ENCODE measurements at regions of chr2 and their contacts with region 1.

Region 1: GRCh38 chr2:27050281-27050995 is 1.0 kb upstream of the AGBL5 start:
- DNase-seq: peak; percentile 95
- H3K4me3 ChIP-seq: peak overlapping the region; percentile 93
- H3K27ac ChIP-seq: peak overlapping the region; percentile 70
- H3K27me3 ChIP-seq: no peaks in the 10 kb centered on the region
- CTCF ChIP-seq: peak; percentile 57

Region 2: DNA sequence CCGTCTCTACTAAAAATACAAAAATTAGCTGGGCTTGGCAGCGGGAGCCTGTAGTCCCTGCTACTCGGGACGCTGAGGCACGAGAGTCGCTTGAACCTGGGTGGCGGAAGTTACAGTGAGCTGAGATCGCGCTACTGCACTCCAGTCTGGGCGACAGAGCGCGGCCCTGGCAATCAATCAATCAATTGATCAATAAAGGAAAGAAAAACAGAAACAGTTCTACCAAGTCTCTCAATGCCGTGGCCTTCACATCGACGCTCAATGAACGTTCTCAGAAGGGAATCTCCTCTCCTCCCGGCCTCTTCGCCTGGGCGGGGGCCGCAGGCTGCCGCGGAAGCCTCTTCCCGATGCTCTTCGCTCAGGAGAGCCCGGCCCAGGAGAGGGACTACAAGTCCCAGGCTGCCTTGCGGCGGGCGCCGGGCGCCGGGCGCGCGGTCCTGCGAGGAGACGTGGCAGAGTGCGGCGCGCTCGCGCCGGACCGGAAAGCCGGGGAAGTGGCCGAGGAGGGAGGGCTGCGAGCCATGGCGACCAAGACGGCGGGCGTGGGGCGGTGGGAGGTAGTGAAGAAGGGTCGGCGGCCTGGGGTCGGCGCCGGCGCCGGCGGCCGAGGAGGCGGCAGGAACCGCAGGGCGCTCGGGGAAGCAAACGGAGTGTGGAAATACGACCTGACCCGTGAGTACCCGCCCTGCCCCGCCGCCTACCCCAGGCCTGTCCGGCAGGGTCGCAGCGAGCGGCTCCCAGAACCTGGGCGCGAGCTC is 17.8 kb before region 1 on chr2 and contains the start of gene TMEM214:
- CTCF ChIA-PET with region 1: no interaction called
- POLR2A ChIA-PET with region 1: interaction called, 26 read pairs
- DNase-seq: peak; percentile 60
- H3K4me3 ChIP-seq: peak within 1 kb of the TSS; percentile 95
- H3K27ac ChIP-seq: peak within 1 kb of the TSS; percentile 68
- H3K27me3 ChIP-seq: no peaks in the 10 kb centered on the region
- CTCF ChIP-seq: no peak
- polyA plus RNA-seq, gene TMEM214: 121 and 145 TPM in 2 replicates

Region 3: DNA sequence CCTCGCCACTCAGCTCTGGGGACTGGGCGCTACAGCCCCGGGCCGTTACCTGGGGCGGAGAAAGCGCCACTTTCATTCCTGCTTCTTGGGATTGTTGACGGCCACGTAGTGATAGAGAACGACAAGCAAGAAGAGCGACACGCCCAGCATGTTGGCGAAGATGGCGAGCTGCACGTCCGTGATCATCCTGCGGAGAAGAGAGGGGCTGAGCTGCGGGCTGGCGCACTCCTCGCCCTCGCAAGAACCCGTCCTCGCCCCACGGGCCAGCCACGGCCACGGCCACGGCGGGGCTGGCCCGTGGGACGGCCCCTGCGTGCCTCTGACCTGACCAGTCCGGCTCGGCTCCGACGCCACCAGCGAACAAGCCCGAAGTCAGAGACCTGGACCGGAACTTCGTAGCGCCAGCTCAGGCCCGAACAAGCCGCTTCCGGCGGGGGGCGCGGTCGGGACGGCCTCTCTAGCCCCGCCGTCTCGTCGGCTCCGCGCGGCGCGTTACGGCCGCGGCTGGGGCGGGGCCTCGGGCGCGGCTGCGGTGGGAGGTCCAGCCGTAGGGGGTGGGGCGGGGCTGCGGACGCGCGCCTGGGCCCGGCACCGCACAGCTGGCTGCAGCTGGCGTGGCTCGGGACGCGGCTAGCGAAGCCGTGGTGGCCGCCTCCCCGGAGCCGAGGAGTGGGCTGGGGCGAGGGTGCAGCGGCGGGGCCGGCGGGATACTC is 21.0 kb after region 1 on chr2 and contains the start of gene OST4:
- CTCF ChIA-PET with region 1: interaction called, 4 read pairs
- POLR2A ChIA-PET with region 1: interaction called, 41 read pairs
- DNase-seq: peak; percentile 84
- H3K4me3 ChIP-seq: peak within 1 kb of the TSS; percentile 96
- H3K27ac ChIP-seq: peak within 1 kb of the TSS; percentile 99
- H3K27me3 ChIP-seq: no peaks in the 10 kb centered on the region
- CTCF ChIP-seq: no peak; the same call in 1 of the 2 replicates
- polyA plus RNA-seq, gene OST4: 679 and 783 TPM in 2 replicates

Region 4: DNA sequence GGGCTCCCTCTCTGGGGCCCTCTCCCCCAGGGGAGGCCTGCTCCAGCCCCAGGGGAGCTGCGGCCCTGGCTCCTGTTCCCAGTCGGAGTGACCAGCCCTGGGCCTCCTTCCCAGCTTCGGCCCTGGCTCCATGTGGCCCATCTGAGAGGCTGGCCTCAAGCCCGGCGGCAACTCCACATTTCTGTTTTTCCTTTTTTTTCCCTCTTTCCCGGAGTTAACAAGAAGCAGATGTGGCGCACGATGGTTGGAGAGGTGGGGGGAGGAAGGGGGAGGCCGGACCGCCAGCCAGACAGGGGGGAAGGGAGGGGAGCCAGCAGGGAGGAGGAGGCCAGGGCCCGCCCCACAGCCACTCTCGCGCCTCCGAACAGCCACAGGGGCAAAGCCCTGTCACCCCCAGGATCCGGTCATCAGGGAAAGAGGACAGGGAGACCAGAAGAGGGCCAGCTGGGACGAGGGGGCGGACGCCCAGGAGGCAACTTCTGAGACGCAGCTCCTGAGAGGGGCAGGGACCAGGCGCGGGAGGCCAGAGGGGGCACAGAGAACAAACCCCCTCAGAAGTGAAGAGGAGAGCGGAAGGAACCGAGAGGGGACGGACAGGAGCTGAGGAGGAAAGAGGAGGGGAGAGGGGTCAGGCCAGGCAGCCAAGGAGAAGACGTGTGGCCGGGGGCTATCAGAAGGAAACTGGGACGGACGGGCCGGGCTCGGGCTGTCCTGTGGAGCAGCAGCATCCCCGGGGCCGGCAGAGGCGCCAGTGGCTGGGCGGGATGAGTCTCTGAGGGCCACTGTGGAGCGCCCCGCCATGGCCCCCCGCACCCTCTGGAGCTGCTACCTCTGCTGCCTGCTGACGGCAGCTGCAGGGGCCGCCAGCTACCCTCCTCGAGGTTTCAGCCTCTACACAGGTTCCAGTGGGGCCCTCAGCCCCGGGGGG is 28.1 kb after region 1 on chr2 and contains the start of gene EMILIN1:
- CTCF ChIA-PET with region 1: interaction called, 5 read pairs
- POLR2A ChIA-PET with region 1: interaction called, 53 read pairs
- DNase-seq: peak; percentile 92
- H3K4me3 ChIP-seq: peak within 1 kb of the TSS; percentile 85
- H3K27ac ChIP-seq: peak within 1 kb of the TSS; percentile 71
- H3K27me3 ChIP-seq: no peaks in the 10 kb centered on the region
- CTCF ChIP-seq: peak; percentile 4; the same call in 1 of the 2 replicates
- polyA plus RNA-seq, gene EMILIN1: 68.3 and 96.0 TPM in 2 replicates

Region 5: GRCh38 chr2:27086090-27086723 is 35.8 kb after region 1 on chr2:
- CTCF ChIA-PET with region 1: interaction called, 5 read pairs
- POLR2A ChIA-PET with region 1: interaction called, 53 read pairs
- DNase-seq: peak; percentile 74
- H3K4me3 ChIP-seq: peak overlapping the region; percentile 49
- H3K27ac ChIP-seq: no peak overlapping the region
- H3K27me3 ChIP-seq: no peaks in the 10 kb centered on the region
- CTCF ChIP-seq: peak; percentile 64

Region 6: GRCh38 chr2:27162151-27163121 is 112.0 kb after region 1 on chr2:
- CTCF ChIA-PET with region 1: no interaction called
- POLR2A ChIA-PET with region 1: no interaction called
- DNase-seq: peak; percentile 7
- H3K4me3 ChIP-seq: no peak overlapping the region
- H3K27ac ChIP-seq: no peak overlapping the region
- H3K27me3 ChIP-seq: peaks cover 35% of the 10 kb centered on the region
- CTCF ChIP-seq: no peak

Region 7: DNA sequence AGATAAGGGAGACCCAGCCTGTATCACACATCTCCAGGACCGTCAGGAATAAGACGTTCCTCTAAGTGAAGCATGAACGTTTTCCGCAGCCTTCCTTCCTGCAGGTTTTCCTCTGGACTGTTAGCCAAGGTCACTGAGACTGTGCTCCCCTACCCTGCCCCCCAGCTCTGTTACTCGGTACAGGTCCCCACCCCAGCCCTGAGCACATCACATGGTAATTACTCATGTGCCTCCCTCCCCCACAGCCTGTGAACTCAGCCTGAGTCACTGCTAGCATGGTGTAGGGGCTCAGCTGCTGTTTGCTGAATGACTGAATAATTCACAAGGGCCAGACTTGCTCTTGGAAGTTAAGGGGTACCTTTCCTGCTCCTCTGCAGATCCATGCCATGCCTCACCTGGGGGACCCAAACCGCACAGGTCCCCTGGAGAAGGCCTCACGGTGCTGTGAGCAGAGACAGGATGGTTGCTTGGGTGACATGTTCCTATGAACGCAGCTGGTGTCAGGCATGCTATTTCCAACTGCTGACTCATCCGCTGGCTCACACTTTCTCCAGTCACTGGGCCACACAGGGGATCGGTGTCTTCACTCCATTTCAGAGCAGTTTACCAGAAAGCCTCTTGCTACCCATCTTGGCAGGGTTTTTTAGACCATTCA is 1533.6 kb after region 1 on chr2:
- CTCF ChIA-PET with region 1: no interaction called
- POLR2A ChIA-PET with region 1: no interaction called
- DNase-seq: peak; percentile 75
- H3K4me3 ChIP-seq: peak overlapping the region; percentile 43
- H3K27ac ChIP-seq: peak overlapping the region; percentile 96
- H3K27me3 ChIP-seq: no peaks in the 10 kb centered on the region
- CTCF ChIP-seq: no peak

Measured in AG04450 (cell line).